ENCODE measurements at regions of chr3 and their contacts with region 1.

Region 1: DNA sequence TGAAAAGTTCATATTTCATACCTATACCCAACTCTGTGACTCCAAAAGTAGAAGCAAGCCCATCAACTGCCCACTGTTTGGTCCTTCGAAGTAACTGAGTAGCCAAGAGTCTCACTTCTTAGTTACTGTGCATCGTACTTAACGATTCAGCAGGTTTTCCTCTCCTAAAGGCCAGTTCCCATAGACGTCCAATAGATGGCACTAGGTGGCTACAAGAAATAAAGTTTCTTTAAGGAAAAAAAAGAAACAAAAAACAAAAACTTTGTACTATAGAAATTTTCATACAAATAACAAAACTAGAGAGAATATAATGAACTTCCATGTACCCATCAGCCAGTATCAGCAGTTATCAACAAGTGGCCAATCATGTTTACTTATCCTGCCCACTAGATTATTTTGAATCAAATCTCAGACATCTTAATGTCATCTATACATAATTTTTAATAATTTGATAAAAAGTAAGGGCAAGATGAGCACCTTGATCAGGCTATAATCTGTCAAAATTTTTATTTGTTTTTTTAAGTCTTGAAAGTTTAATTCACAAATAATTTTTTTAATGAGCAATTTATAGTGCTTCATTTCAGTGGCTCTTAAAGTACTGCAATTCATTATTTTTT is 63.8 kb upstream of the ACP3 start:
- DNase-seq: no peak
- ATAC-seq: no peak
- H3K4me3 ChIP-seq: no peak overlapping the region
- H3K27ac ChIP-seq: no peak overlapping the region
- H3K4me1 ChIP-seq: no peaks in the 10 kb centered on the region
- H3K27me3 ChIP-seq: no peaks in the 10 kb centered on the region

Region 2: GRCh38 chr3:132343018-132343612 is 89.7 kb after region 1 on chr3:
- intact Hi-C with region 1: loop called (anchors 2 kb)
- DNase-seq: no peak
- ATAC-seq: peak; percentile 81
- H3K4me3 ChIP-seq: no peak overlapping the region
- H3K27ac ChIP-seq: no peak overlapping the region
- H3K4me1 ChIP-seq: no peaks in the 10 kb centered on the region
- H3K27me3 ChIP-seq: no peaks in the 10 kb centered on the region

Region 3: GRCh38 chr3:132399054-132399929 is 145.9 kb after region 1 on chr3:
- intact Hi-C with region 1: loop called in 1 of 2 experiments (anchors 10 kb)
- DNase-seq: no peak
- ATAC-seq: peak; percentile 63
- H3K4me3 ChIP-seq: no peak overlapping the region
- H3K27ac ChIP-seq: no peak overlapping the region
- H3K4me1 ChIP-seq: no peaks in the 10 kb centered on the region
- H3K27me3 ChIP-seq: no peaks in the 10 kb centered on the region

Region 4: DNA sequence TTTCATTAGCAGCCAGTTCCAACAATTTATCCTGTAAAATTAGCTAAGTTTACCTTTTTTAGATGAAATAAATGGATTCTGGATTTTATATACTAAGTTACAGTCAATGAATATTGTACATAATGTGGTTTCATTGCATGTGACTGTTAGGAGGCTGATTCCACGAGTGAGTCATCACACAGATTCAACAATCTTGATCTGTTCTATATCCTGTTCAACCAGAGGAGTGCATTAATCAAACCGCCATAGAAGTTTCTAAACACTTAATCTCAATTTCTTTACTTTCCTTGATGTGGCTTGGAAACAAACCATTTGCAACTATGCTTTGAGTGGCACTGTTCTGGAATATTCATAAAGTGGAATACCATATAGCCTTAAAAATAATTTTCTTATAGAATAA is 179.3 kb after region 1 on chr3:
- intact Hi-C with region 1: no loop called
- DNase-seq: no peak
- ATAC-seq: no peak
- H3K4me3 ChIP-seq: no peak overlapping the region
- H3K27ac ChIP-seq: no peak overlapping the region
- H3K4me1 ChIP-seq: no peaks in the 10 kb centered on the region
- H3K27me3 ChIP-seq: no peaks in the 10 kb centered on the region